Activated CD8-positive, alpha-beta memory T cell treated with anti-CD3 and anti-CD28 coated beads, Interleukin-2, amount 10 ng/mL, durations not matched to agents 7 days and 5 days (primary cell): ENCODE measurements at regions of chr17 and their contacts with region 1.

Region 1: DNA sequence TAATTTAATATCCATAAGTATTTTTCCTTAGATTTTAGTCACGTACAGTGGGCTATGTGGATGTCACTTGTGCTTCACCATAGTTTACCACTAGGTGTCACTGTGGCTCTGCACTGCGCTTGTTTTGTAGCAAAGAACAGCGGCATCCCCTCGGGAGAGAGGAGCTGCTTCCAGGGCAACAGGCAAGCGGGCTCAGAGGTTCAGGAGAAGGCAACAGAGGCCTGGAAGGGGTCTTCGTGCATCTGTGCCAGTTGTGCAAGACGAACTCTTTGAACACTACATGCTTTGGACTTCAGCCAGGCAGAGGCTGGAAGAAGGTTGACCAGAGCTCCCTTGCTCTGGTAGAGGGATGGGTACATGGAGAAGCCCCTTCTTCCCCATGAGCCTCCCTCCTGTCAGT is 20.6 kb downstream of the CYB561 start:
- DNase-seq: peak; percentile 83
- ATAC-seq: peak; percentile 75
- H3K4me3 Mint-ChIP-seq: no peak overlapping the region
- H3K27ac Mint-ChIP-seq: no peak overlapping the region
- H3K4me1 Mint-ChIP-seq: peaks cover 52% of the 10 kb centered on the region
- H3K27me3 Mint-ChIP-seq: no peaks in the 10 kb centered on the region

Region 2: DNA sequence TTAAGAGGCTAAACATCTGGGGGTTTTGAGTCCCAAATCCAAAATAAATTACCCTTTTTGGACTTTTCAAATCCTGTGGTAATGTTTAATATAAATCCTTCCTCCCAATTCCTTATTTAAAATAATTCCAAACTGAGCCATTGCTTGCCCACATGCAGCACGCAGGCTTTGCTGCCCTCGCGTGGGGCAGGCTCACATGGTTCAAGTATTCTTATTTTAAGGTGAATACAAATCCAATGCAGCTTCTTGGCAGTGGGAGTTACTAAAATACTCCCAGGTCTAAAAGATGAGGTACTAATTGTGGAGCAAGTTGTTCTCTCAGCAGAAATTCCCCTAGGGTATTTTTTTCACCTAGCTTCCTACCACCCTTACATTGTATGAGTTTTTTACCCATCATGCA is 12.4 kb before region 1 on chr17:
- CTCF ChIA-PET with region 1: interaction called, 45 read pairs
- DNase-seq: no peak
- ATAC-seq: no peak
- H3K4me3 Mint-ChIP-seq: no peak overlapping the region
- H3K27ac Mint-ChIP-seq: no peak overlapping the region
- H3K4me1 Mint-ChIP-seq: no peaks in the 10 kb centered on the region
- H3K27me3 Mint-ChIP-seq: no peaks in the 10 kb centered on the region

Region 3: DNA sequence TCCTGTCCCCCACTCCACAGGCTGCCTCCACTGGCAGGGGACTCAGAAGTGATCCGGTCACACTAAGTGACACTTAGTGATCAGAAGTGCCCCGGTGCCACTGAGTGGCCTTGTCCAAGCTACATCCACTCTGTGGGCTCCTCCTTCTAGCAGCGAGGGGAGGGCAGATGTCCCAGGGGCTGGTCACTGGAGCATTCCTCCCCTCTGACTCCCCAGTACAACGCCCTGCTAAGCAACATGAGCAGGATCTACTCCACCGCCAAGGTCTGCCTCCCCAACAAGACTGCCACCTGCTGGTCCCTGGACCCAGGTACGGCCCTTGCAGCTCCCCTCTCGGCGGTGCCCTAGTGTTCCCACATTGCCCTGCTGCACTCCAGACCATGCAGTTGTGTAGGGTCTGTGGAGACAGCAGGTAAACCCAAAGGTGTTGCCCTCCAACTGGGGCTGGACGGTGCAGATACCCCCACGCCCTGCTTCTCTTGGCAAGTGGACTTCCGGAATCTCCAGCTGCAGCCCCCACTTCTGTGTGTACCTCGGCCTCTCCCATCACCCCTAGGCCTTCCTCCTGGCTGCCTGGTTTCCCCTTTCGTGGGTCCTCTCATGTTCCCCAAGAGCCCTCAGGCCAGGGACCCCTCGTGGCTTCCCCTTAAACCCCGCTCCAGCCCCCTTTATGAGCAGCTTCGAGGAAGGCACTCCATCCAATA is 53.5 kb after region 1 on chr17:
- CTCF ChIA-PET with region 1: interaction called, 324 read pairs
- DNase-seq: peak; percentile 89
- ATAC-seq: peak; percentile 90
- H3K4me3 Mint-ChIP-seq: no peak overlapping the region
- H3K27ac Mint-ChIP-seq: no peak overlapping the region
- H3K4me1 Mint-ChIP-seq: peaks cover 10% of the 10 kb centered on the region
- H3K27me3 Mint-ChIP-seq: peaks cover 39% of the 10 kb centered on the region

Region 4: GRCh38 chr17:63621766-63622519 is 196.5 kb after region 1 on chr17 and contains the start of gene MAP3K3:
- CTCF ChIA-PET with region 1: interaction called, 249 read pairs
- DNase-seq: peak; percentile 99
- ATAC-seq: peak; percentile 91
- H3K4me3 Mint-ChIP-seq: peak within 1 kb of the TSS; percentile 97
- H3K27ac Mint-ChIP-seq: peak within 1 kb of the TSS; percentile 89
- H3K4me1 Mint-ChIP-seq: peaks cover 29% of the 10 kb centered on the region
- H3K27me3 Mint-ChIP-seq: peaks cover 3% of the 10 kb centered on the region
- total RNA-seq, gene MAP3K3: 29.0 to 36.5 TPM

Region 5: GRCh38 chr17:63707151-63707550 is 281.7 kb after region 1 on chr17:
- CTCF ChIA-PET with region 1: interaction called, 14 read pairs
- DNase-seq: peak; percentile 41
- ATAC-seq: peak; percentile 2
- H3K4me3 Mint-ChIP-seq: no peak overlapping the region
- H3K27ac Mint-ChIP-seq: peak overlapping the region; percentile 71
- H3K4me1 Mint-ChIP-seq: peaks cover 69% of the 10 kb centered on the region
- H3K27me3 Mint-ChIP-seq: no peaks in the 10 kb centered on the region